ENCODE measurements at regions of chr1 and their contacts with region 1.

Region 1: DNA sequence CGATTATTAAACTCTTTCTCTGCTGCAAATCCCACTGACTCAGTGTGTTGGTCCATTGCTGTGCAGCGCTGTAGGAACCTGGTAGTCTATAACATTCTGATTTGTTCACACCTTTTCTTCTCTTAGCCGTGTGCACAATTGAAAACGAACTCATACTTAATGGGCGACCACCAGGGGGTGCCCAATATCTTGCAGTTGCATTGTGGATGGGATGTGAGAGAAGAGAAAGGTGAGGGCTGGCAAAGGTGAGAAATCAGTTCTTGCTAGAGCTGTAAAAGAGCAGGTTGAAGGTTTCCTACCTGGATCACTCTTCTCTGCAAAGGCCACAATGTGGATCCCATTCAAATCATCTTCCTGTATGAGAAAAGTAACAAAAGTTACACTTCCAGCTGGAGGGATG is 51.0 kb downstream of the CASQ2 start:
- DNase-seq: peak; percentile 77
- ATAC-seq: peak; percentile 53
- H3K4me3 Mint-ChIP-seq: no peak overlapping the region
- H3K27ac Mint-ChIP-seq: no peak overlapping the region
- H3K4me1 Mint-ChIP-seq: peaks cover 23% of the 10 kb centered on the region
- H3K27me3 Mint-ChIP-seq: peaks cover 3% of the 10 kb centered on the region; the same call in 1 of the 2 replicates
- CTCF ChIP-seq: peak; percentile 66

Region 2: GRCh38 chr1:115764541-115764940 is 47.0 kb after region 1 on chr1:
- CTCF ChIA-PET with region 1: interaction called, 88 read pairs
- POLR2A ChIA-PET with region 1: interaction called, 3 read pairs
- DNase-seq: no peak
- ATAC-seq: peak; percentile 57; the same call in 1 of the 2 replicates
- H3K4me3 Mint-ChIP-seq: no peak overlapping the region
- H3K27ac Mint-ChIP-seq: no peak overlapping the region
- H3K4me1 Mint-ChIP-seq: peaks cover 13% of the 10 kb centered on the region
- H3K27me3 Mint-ChIP-seq: no peaks in the 10 kb centered on the region
- CTCF ChIP-seq: no peak